Heart right ventricle (tissue), 16 donors: ENCODE measurements at regions of chr9 and their contacts with region 1.

Region 1: DNA sequence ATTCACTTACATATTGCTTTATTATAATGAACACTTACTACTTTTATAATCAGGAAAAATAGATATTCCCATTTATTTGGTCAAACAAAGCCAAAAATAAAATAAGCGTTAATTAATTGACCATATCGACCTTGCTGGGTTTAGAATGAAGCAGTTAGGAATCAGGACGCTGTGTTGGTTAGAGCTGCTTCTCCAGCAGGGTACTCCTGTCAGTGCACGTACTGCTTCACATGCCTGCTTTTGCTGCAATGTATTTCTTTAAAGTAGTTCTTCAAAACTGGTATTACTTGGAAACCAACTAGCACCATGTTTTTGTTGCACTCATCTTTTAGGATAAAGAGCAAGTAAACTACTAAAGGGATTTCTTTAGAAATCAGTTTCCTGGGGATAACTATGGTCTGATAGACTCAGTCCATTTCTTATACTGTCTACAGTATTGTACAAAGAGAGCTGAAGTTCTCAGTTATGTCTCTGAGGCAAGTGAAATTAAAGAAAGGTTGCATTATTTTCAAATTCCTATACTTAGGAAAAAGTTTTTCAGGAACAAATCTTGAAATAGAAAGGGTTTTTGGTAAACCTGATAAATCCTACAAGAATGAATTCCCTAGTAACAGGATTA is 6.8 kb upstream of the TRMO start:
- DNase-seq: no peak
- ATAC-seq: no peak
- H3K4me3 ChIP-seq: no peak overlapping the region
- H3K27ac ChIP-seq: no peak overlapping the region
- H3K4me1 ChIP-seq: peaks cover 0 to 2% (median 0%) of the 10 kb centered on the region in 9 donors
- H3K27me3 ChIP-seq: peaks cover 0 to 72% (median 18%) of the 10 kb centered on the region in 7 donors
- CTCF ChIP-seq: no peak

Region 2: DNA sequence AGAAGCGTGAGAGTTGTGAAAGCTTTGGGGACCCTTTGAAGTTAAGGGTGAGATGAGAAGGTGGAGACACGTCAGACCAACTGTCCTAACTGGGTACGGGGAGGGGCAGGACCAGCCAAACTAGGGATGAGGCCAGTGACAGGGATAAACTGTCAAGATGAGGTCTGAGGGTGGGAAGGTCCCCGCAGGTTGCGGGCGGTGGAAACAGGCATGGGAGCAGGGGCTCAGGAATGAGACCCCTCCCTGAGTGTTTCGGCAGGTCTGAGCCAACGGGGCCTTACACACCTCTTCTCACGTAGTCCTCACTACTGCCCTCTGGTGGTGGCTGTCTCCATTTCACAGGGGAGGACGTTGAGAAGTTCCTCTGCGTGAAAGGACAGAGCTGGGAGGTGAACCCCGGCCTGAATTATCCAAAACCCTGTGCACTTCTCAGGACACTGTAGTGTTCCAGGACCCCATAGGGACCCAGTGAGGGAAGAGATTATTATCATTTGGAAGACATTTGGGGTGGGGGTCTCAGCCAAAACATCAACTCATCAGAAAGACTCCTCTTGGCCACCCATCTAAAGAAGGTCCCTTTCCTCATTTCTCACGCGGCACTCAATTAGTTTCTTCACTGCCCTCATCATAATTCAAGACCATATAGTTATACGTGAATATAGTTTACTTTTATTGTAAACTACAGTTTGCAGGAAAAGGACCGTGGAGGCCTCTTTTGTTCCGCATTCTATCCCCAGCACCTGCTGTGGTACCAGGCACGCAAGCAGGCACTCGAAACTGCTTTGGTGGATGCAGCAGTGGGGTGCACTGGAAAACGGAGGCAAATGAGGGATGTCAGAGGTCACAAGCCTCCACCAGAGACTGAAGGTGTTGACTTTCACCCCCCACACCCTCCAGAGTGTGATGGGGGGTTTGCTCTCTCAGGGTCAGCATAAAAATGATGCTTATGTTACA is 105.8 kb after region 1 on chr9:
- intact Hi-C with region 1: loop called in 5 of 10 experiments (anchors 2 to 10 kb)
- DNase-seq: peak; percentile 75 to 88
- ATAC-seq: peak; percentile 80 to 92 (median 86)
- H3K4me3 ChIP-seq: peak overlapping the region in 3 of 10 donors; percentile 7 to 22 (median 22)
- H3K27ac ChIP-seq: no peak overlapping the region
- H3K4me1 ChIP-seq: peaks cover 0 to 22% (median 15%) of the 10 kb centered on the region in 9 donors
- H3K27me3 ChIP-seq: no peaks in the 10 kb centered on the region
- CTCF ChIP-seq: peak; percentile 69 to 92 (median 89)